Cardiac septum (tissue), 1 donor: ENCODE measurements at regions of chr11 and their contacts with region 1.

Region 1: DNA sequence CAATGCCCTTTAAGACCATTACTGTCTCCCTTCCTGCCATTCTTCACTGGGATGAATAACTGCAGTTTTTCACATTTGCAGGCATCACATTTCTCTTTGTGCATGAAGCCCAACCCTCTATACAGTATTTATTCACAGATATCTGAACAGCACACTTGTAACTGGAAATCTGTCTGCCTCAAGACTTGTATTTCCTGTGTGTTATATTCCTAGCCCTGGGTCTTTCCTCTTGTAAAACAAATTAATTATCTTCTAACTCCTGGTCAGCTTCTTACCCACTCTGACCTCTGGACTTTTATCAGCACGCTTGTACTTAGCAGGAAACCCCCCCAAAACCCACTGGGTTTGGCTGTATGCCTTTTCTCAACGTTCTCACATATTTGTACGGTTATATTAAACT is 2.0 kb downstream of the CSRP3 start:
- DNase-seq: no peak

Region 2: GRCh38 chr11:18907391-18907790 is 292.4 kb before region 1 on chr11:
- intact Hi-C with region 1: no loop called
- DNase-seq: no peak

Region 3: GRCh38 chr11:19237813-19238212 is 38.0 kb after region 1 on chr11:
- intact Hi-C with region 1: loop called (anchors 5 kb)
- DNase-seq: no peak